ENCODE measurements at regions of chr15 and their contacts with region 1.

Region 1: GRCh38 chr15:83538682-83539081 is 91.5 kb downstream of the SH3GL3 start:
- DNase-seq: no peak
- H3K4me3 ChIP-seq: no peak overlapping the region
- H3K27ac ChIP-seq: no peak overlapping the region
- H3K27me3 ChIP-seq: no peaks in the 10 kb centered on the region
- CTCF ChIP-seq: no peak

Region 2: GRCh38 chr15:83352119-83352518 is 186.6 kb before region 1 on chr15:
- CTCF ChIA-PET with region 1: no interaction called
- POLR2A ChIA-PET with region 1: no interaction called
- DNase-seq: no peak
- H3K4me3 ChIP-seq: no peak overlapping the region
- H3K27ac ChIP-seq: no peak overlapping the region
- H3K27me3 ChIP-seq: no peaks in the 10 kb centered on the region
- CTCF ChIP-seq: no peak

Region 3: GRCh38 chr15:83549623-83550022 is 10.9 kb after region 1 on chr15:
- CTCF ChIA-PET with region 1: interaction called, 10 read pairs
- POLR2A ChIA-PET with region 1: no interaction called
- DNase-seq: no peak
- H3K4me3 ChIP-seq: no peak overlapping the region
- H3K27ac ChIP-seq: no peak overlapping the region
- H3K27me3 ChIP-seq: peaks cover 2% of the 10 kb centered on the region
- CTCF ChIP-seq: no peak

Measured in AG04450 (cell line).